ENCODE measurements at regions of chr2 and their contacts with region 1.

Region 1: GRCh38 chr2:42828487-42829425 is 36.4 kb upstream of the HAAO start:
- DNase-seq: peak; percentile 80 to 96
- ATAC-seq: peak; percentile 89 to 96
- H3K4me3 ChIP-seq: no peak overlapping the region
- H3K27ac ChIP-seq: peak overlapping the region; percentile 9 to 57; a peak in 5 of 6 replicates
- H3K4me1 ChIP-seq: peaks cover 15% of the 10 kb centered on the region
- CTCF ChIP-seq: peak; percentile 93
- EP300 ChIP-seq: no peak
- POLR2A ChIP-seq: no peak
- RAD21 ChIP-seq: peak; percentile 87 to 93

Region 2: GRCh38 chr2:42673989-42674579 is 154.7 kb before region 1 on chr2:
- CTCF ChIA-PET with region 1: no interaction called
- POLR2A ChIA-PET with region 1: no interaction called
- DNase-seq: no peak
- ATAC-seq: no peak
- H3K4me3 ChIP-seq: no peak overlapping the region
- H3K27ac ChIP-seq: no peak overlapping the region
- H3K4me1 ChIP-seq: peaks cover 3% of the 10 kb centered on the region; the same call in 1 of the 3 replicates
- CTCF ChIP-seq: no peak
- EP300 ChIP-seq: no peak
- POLR2A ChIP-seq: no peak
- RAD21 ChIP-seq: no peak

Region 3: GRCh38 chr2:42736598-42737322 is 92.0 kb before region 1 on chr2:
- CTCF ChIA-PET with region 1: no interaction called
- POLR2A ChIA-PET with region 1: no interaction called
- DNase-seq: no peak
- ATAC-seq: no peak; a peak in 1 of 6 replicates
- H3K4me3 ChIP-seq: no peak overlapping the region
- H3K27ac ChIP-seq: no peak overlapping the region
- H3K4me1 ChIP-seq: no peaks in the 10 kb centered on the region
- CTCF ChIP-seq: no peak
- EP300 ChIP-seq: no peak
- POLR2A ChIP-seq: no peak
- RAD21 ChIP-seq: no peak

Region 4: DNA sequence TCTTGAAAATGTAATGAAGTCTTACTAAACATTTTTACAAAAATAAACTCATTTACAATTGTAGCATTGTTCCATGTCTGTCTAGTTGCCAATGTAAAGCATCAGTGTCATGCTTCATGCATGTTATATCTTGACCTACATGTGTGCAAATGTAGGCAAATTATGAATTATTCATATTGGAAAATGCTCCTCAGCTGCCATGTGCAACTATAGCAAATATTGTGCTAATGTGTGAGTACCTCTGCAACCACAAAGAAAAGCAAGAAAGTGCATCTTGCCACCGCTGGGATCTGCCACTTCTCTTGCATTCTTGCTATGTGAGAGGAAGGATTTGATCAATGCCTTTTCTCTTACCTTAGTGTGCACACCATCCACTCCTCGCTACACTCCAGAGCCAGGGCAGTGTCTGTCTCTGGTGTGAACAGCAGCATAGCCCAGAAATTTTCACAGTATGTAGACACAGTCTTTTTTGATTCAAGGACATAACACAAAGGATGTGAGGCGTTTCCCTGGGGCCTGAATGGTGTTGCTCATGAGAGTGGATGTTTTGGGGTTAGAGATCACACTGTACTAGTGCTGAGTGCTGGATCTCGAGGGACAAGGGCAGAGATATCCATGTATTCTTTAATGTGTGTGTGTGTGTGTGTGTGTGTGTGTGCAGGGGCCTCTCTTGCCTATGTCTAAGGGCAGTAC is 11.2 kb after region 1 on chr2:
- CTCF ChIA-PET with region 1: interaction called, 44 read pairs
- POLR2A ChIA-PET with region 1: no interaction called
- DNase-seq: no peak
- ATAC-seq: peak in 1 of 2 experiments; percentile 12; a peak in 1 of 6 replicates
- H3K4me3 ChIP-seq: no peak overlapping the region
- H3K27ac ChIP-seq: 0 out of 6 replicates have a peak overlapping the region, but pooled peaks of 1 of the 2 experiments have one; percentile 12
- H3K4me1 ChIP-seq: peaks cover 16% of the 10 kb centered on the region
- CTCF ChIP-seq: no peak
- EP300 ChIP-seq: no peak
- POLR2A ChIP-seq: no peak
- RAD21 ChIP-seq: no peak

Region 5: DNA sequence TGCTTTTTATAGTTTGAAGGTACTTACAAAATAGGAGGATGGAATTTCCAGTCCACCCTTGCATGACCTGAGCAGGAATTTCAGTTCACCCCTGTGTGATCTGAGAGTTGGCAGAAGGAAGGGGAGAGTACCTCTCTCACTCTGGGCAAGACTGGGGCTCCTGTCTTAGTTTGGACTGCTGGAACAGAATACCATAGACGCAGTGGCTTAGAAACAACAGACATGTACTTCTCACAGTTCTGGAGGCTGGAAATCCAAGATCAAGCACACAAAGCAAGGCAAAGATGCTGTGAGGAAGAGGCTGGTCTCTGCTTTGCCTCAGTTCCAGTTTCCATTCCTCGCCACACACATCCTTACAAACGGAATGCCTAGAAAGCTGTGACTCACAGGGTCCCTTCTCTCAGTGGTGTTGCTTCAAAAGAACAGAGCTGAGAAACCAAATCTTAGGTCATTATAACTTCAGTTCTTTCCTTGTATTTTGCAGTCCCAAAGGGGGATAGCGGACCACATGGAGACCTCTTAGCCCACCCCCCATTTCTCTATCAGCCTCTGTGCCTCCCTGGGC is 72.4 kb after region 1 on chr2:
- CTCF ChIA-PET with region 1: interaction called, 20 read pairs
- POLR2A ChIA-PET with region 1: no interaction called
- DNase-seq: no peak
- ATAC-seq: no peak
- H3K4me3 ChIP-seq: no peak overlapping the region
- H3K27ac ChIP-seq: no peak overlapping the region
- H3K4me1 ChIP-seq: peaks cover 17% of the 10 kb centered on the region
- CTCF ChIP-seq: no peak
- EP300 ChIP-seq: no peak
- POLR2A ChIP-seq: no peak
- RAD21 ChIP-seq: no peak

Region 6: GRCh38 chr2:42928692-42929545 is 100.2 kb after region 1 on chr2:
- CTCF ChIA-PET with region 1: interaction called, 24 read pairs
- POLR2A ChIA-PET with region 1: no interaction called
- DNase-seq: peak; percentile 63
- ATAC-seq: peak; percentile 48 to 79; a peak in 4 of 6 replicates
- H3K4me3 ChIP-seq: no peak overlapping the region
- H3K27ac ChIP-seq: peak overlapping the region in 1 of 2 experiments; percentile 54; a peak in 1 of 6 replicates
- H3K4me1 ChIP-seq: peaks cover 37% of the 10 kb centered on the region
- CTCF ChIP-seq: peak; percentile 40; the same call in 2 of the 3 replicates
- EP300 ChIP-seq: no peak
- POLR2A ChIP-seq: no peak
- RAD21 ChIP-seq: peak in 1 of 2 experiments; percentile 29; a peak in 2 of 5 replicates

Region 7: DNA sequence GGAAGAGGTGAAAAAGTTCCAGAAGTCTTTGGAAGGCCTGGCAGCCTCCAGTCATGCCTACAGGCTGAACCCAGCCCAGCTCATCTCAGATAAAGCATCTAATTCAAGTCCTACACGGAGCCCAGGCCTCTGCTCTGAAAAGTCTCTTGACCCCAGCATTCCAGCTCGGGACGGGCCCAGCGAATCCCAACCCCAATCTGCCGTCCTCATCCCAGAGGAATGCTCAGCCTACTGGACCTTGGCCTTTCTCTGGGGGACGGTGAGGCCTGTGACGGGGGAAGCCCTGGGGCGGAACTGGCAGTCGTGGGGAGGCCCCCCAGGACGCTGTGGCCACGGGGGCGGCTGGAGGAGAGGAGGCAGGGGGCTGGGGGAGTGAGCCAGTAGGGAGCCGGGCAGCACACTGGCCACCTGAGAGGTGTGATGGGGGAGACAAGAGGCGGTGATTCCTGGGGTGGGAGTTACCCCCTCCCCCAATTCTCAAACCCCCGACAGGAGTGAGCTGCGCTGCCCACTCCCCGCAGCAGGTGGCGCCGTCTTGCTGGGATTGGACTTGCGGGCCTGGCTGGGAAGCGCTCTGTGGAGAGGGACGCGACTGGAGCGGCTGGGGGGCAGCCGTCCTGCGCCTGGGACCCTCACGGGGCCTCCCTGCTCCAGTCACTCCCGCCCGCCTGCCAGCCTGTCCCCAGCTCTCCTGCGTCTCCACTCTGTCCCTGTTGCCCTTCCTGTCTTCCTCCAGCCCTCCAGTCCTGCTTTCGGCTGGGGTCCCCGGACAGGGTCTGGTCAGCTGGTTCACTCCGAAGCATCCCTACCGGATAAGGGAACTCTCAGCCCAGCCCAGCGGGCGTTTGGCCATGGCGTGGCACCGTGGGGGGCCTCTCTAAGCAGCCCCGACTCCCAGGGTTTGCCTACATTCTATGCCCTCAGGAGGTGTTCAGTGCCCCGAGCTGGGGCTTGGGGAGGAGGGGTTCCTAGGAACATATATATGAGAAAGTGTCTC is 146.3 kb after region 1 on chr2:
- CTCF ChIA-PET with region 1: interaction called, 19 read pairs
- POLR2A ChIA-PET with region 1: no interaction called
- DNase-seq: peak; percentile 58 to 64
- ATAC-seq: peak; percentile 60 to 86
- H3K4me3 ChIP-seq: peak overlapping the region; percentile 31
- H3K27ac ChIP-seq: peak overlapping the region; percentile 73 to 87
- H3K4me1 ChIP-seq: peaks cover 37% of the 10 kb centered on the region
- CTCF ChIP-seq: peak; percentile 94
- EP300 ChIP-seq: no peak
- POLR2A ChIP-seq: no peak
- RAD21 ChIP-seq: peak; percentile 99

Measured in A549 (cell line).